ENCODE measurements at regions of chr16 and their contacts with region 1.

Region 1: DNA sequence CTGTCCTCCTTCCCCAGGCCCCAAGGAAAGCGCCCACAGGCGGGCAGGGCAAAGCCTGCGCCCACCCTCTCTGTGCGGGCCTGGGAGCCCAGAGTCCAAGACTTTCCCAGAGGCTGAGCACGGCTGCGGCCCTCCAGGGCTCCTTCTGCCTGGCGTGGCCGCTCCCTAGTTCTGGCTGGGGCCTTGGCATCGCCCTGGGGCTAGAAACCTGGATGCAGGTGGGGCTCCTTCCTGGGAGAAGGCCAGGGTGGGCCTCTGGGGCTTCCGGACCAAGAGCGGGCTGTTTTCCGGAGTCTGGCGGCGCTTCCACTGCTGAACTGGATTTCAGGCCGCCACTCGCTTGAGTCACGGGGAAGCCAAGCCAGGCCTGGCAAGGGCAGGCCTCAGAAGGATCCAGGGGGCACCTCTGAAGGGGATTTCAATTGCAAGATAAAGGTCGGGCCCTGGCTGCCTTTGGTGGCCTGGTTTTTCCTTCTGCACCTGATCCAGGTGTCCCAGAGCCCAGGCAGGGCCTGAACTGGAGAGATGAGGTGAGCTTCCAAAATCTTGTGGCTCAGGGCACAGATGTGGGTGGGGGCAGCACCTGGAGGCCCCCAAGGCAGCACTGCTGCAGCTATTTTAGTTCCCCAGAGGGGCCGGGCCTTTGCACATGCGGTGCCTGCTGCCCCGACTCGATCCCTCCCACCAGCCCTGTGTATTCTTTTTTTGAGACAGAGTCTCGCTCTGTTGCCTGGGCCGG is 227.4 kb downstream of the MRTFB start:
- DNase-seq: no peak
- H3K4me3 ChIP-seq: no peak overlapping the region
- H3K27ac ChIP-seq: no peak overlapping the region
- H3K4me1 ChIP-seq: peaks cover 15 to 25% (median 19%) of the 10 kb centered on the region in 4 donors
- H3K27me3 ChIP-seq: peaks cover 0 to 23% (median 0%) of the 10 kb centered on the region in 3 donors
- CTCF ChIP-seq: no peak
- EP300 ChIP-seq: no peak
- POLR2A ChIP-seq: no peak

Region 2: GRCh38 chr16:14354551-14355351 is 56.2 kb after region 1 on chr16:
- intact Hi-C with region 1: no loop called
- DNase-seq: peak in 1 of 2 donors; percentile 53
- H3K4me3 ChIP-seq: peak overlapping the region in 1 of 4 donors; percentile 1
- H3K27ac ChIP-seq: peak overlapping the region in 1 of 5 donors; percentile 46
- H3K4me1 ChIP-seq: peaks cover 0 to 9% (median 2%) of the 10 kb centered on the region in 4 donors
- H3K27me3 ChIP-seq: peaks cover 0 to 5% (median 0%) of the 10 kb centered on the region in 3 donors
- CTCF ChIP-seq: no peak
- EP300 ChIP-seq: no peak
- POLR2A ChIP-seq: no peak

Region 3: DNA sequence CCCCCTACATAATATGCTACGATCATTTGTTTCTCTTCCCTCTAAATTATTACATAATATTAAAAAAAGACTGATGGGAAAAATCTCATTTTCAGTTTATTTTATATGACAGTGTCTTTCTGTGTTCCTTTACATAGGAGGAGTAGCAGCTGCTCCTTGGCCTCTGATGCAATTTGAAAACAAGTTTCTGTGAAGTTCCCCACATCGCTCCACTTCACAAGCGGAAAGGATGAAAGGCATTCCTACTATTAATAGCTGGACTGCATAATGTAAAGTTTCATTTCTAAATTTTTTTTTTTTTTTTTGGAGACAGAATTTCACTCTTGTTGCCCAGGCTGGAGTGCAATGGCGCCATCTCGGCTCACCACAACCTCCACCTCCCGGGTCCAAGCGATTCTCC is 236.0 kb after region 1 on chr16:
- intact Hi-C with region 1: loop called (anchors 5 kb)
- DNase-seq: no peak
- H3K4me3 ChIP-seq: no peak overlapping the region
- H3K27ac ChIP-seq: no peak overlapping the region
- H3K4me1 ChIP-seq: peaks cover 0 to 14% (median 3%) of the 10 kb centered on the region in 4 donors
- H3K27me3 ChIP-seq: no peaks in the 10 kb centered on the region
- CTCF ChIP-seq: no peak
- EP300 ChIP-seq: no peak
- POLR2A ChIP-seq: no peak

Measured in stomach (tissue), 19 donors.